PC-9 (cell line): ENCODE measurements at regions of chr15 and their contacts with region 1.

Region 1: GRCh38 chr15:74545880-74546656 is 5.0 kb downstream of the ARID3B start:
- DNase-seq: peak; percentile 92 to 97
- H3K4me3 ChIP-seq: no peak overlapping the region
- H3K27ac ChIP-seq: no peak overlapping the region
- H3K4me1 ChIP-seq: peaks cover 12% of the 10 kb centered on the region
- H3K27me3 ChIP-seq: no peaks in the 10 kb centered on the region
- CTCF ChIP-seq: no peak

Region 2: DNA sequence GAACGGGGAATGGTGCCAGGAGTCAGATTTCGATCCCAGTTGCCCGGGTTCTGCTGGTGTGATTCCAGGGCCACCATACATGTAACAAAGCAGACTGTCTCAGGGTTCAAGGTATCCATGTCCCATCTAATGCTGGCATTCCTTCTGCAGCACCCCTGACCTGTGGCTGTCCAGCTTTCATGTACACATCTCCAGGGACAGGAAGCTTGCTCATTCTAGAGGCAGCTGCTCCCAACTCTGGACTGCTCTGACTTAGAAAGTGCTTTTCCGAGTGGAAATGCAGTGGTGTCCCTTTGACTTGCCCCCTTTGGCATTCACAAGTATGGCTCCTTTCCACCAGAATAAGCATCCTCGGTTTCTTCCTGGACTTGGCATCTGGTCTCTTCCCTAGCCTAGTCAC is 520.6 kb before region 1 on chr15:
- CTCF ChIA-PET with region 1: no interaction called
- POLR2A ChIA-PET with region 1: no interaction called
- intact Hi-C with region 1: no loop called
- DNase-seq: no peak
- H3K4me3 ChIP-seq: no peak overlapping the region
- H3K27ac ChIP-seq: no peak overlapping the region
- H3K4me1 ChIP-seq: no peaks in the 10 kb centered on the region
- H3K27me3 ChIP-seq: no peaks in the 10 kb centered on the region
- CTCF ChIP-seq: no peak

Region 3: GRCh38 chr15:74365611-74366440 is 180.2 kb before region 1 on chr15:
- CTCF ChIA-PET with region 1: interaction called, 19 read pairs
- POLR2A ChIA-PET with region 1: no interaction called
- intact Hi-C with region 1: no loop called
- DNase-seq: peak; percentile 44 to 59
- H3K4me3 ChIP-seq: peak overlapping the region; percentile 86
- H3K27ac ChIP-seq: peak overlapping the region; percentile 86
- H3K4me1 ChIP-seq: peaks cover 28% of the 10 kb centered on the region
- H3K27me3 ChIP-seq: no peaks in the 10 kb centered on the region
- CTCF ChIP-seq: no peak

Region 4: GRCh38 chr15:74497584-74497983 is 48.5 kb before region 1 on chr15:
- CTCF ChIA-PET with region 1: no interaction called
- POLR2A ChIA-PET with region 1: no interaction called
- intact Hi-C with region 1: loop called (anchors 1 kb)
- DNase-seq: peak; percentile 63 to 89
- H3K4me3 ChIP-seq: no peak overlapping the region
- H3K27ac ChIP-seq: peak overlapping the region; percentile 50; the same call in 1 of the 2 replicates
- H3K4me1 ChIP-seq: peaks cover 13% of the 10 kb centered on the region
- H3K27me3 ChIP-seq: no peaks in the 10 kb centered on the region
- CTCF ChIP-seq: no peak

Region 5: DNA sequence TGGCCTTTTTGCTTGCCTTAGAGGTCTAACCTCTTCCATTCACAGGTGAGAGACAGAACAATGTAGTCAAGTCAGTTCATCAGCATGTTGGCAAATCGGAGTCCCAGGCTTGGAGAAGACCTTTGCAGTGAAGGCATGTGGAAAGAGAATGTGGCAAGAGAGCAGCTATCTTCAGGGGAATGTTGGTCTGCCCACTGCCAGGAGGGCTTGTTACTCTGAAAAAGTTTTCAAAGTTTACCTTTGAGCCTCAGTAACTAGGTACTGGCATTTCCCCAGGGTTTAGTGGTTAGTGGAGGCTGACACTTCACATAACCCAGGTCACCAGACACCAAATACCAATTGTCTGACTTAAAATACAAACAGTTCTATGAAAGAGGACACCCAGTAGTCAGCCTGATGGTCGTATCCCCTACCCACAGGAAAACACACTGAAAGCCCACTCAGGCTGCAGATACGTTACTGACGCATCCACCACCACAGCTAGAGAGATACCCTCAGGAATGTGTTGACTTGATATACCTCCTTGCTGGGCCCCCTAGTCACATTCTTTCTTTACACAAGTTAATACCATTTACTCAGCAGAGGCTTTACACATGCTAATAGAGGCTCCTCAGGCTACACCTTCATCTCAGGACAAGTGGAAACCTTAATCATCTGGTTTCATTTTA is 14.8 kb before region 1 on chr15:
- CTCF ChIA-PET with region 1: no interaction called
- POLR2A ChIA-PET with region 1: no interaction called
- intact Hi-C with region 1: loop called (anchors 1 kb)
- DNase-seq: peak; percentile 77 to 97
- H3K4me3 ChIP-seq: peak overlapping the region; percentile 32; the same call in 1 of the 2 replicates
- H3K27ac ChIP-seq: peak overlapping the region; percentile 90
- H3K4me1 ChIP-seq: peaks cover 36% of the 10 kb centered on the region
- H3K27me3 ChIP-seq: no peaks in the 10 kb centered on the region
- CTCF ChIP-seq: no peak